ENCODE measurements at regions of chr22 and their contacts with region 1.

Region 1: DNA sequence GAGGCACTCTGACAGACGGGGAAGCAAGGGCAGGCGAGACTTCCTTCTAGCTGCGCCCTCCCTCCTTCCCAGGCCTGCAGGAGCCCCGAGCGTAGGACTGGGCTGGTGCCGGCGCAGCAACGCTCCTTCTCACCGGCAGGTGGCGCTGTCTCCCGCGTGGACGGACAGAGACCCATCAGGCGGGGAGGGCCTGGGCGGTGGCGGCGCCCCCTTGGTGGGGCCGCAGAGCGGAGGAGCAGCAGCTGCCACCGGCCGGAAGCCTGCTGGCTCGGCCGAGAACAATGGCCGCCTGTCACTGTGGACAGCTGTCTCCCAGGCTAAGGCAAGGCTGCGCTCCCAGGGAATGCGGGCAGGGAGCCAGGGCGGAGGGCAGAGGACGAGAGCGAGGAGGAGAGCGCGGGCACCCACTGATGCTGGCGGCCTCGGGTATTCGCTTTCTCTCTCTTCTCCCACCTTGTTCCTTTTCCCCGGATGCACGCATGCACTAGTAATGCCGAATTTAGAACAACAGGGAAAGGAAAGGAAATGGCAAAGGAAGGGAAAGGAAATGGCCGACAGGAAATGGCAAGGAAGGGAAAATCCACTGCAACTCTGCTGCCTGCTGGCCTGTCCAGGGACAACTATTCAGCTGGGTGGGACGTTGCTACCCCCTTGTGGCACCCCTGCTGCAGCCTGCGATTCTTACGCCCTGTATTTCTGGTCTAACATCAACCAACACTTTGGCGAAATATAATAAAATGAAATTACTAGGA is 14.4 kb downstream of the PPM1F start:
- DNase-seq: peak; percentile 73
- H3K4me3 ChIP-seq: peak overlapping the region; percentile 51
- CTCF ChIP-seq: peak; percentile 97

Region 2: GRCh38 chr22:21712894-21713712 is 225.1 kb before region 1 on chr22:
- in situ Hi-C with region 1: loop called (anchors 5 kb)
- DNase-seq: peak; percentile 54
- H3K4me3 ChIP-seq: no peak overlapping the region
- CTCF ChIP-seq: peak; percentile 84

Region 3: GRCh38 chr22:21837248-21837979 is 100.8 kb before region 1 on chr22:
- in situ Hi-C with region 1: no loop called
- DNase-seq: peak; percentile 69
- H3K4me3 ChIP-seq: no peak overlapping the region
- CTCF ChIP-seq: no peak

Region 4: GRCh38 chr22:21850660-21851059 is 87.6 kb before region 1 on chr22:
- in situ Hi-C with region 1: loop called (anchors 5 kb)
- DNase-seq: no peak
- H3K4me3 ChIP-seq: no peak overlapping the region
- CTCF ChIP-seq: no peak

Region 5: DNA sequence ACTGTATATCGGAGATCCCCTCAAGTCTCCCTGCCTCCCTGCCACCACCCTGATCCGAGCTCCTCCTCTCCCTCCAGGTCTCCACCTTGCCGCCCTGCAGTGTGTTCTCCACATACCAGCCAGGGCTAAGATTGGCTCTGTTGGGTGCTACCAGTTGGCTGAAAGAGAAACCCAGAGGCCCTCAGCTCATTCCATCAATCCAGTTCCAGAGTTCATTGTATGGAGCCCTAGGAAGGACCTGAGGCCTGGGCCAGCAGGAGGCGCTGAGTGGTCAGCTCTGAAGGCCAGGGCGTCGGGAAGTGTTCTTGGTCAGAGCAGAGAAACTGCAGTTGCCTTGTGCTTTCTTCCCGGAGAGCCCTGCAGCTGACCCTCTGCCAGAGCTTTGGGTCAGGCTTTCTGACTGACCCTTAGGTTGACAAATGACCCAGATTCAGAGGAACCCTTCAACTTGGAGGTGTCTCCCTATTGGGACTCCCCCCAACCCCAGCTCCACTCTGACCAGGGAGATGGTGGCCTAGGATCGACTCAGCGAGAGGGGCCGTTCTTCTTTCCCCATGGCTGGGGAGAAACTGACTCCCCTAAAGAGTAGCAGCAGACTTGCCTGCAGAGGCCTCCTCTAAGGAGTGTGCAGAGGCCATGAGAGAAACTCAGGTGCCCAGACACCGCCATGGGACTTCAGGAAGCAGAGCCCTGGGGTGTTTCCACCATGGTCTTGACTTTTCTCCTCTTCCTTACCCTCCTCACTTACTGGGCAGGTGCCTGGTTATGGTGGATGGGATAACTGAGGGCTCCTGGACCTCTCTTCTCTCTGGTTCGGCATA is 46.8 kb after region 1 on chr22:
- in situ Hi-C with region 1: no loop called
- DNase-seq: no peak
- H3K4me3 ChIP-seq: no peak overlapping the region
- CTCF ChIP-seq: peak; percentile 32

Region 6: GRCh38 chr22:22030493-22031182 is 92.4 kb after region 1 on chr22:
- in situ Hi-C with region 1: loop called (anchors 25 kb)
- DNase-seq: no peak
- H3K4me3 ChIP-seq: no peak overlapping the region
- CTCF ChIP-seq: peak; percentile 4

Region 7: GRCh38 chr22:23240639-23241389 is 1302.6 kb after region 1 on chr22:
- in situ Hi-C with region 1: loop called (anchors 25 kb)
- DNase-seq: no peak
- H3K4me3 ChIP-seq: no peak overlapping the region
- CTCF ChIP-seq: peak; percentile 40

Measured in astrocyte of the cerebellum (primary cell).